ENCODE measurements at regions of chr9 and their contacts with region 1.

Region 1: GRCh38 chr9:109440797-109441287 is 57.3 kb downstream of the PTPN3 start:
- DNase-seq: peak; percentile 90
- ATAC-seq: peak; percentile 97
- H3K4me3 ChIP-seq: no peak overlapping the region
- H3K27ac ChIP-seq: no peak overlapping the region
- H3K4me1 ChIP-seq: no peaks in the 10 kb centered on the region
- H3K27me3 ChIP-seq: peaks cover 6% of the 10 kb centered on the region; the same call in 1 of the 2 replicates
- CTCF ChIP-seq: peak; percentile 89
- POLR2A ChIP-seq: no peak
- RAD21 ChIP-seq: peak; percentile 73

Region 2: GRCh38 chr9:109469646-109470358 is 29.0 kb after region 1 on chr9:
- CTCF ChIA-PET with region 1: interaction called, 10 read pairs
- POLR2A ChIA-PET with region 1: no interaction called
- dilution Hi-C with region 1: no loop called
- in situ Hi-C with region 1: no loop called
- intact Hi-C with region 1: loop called (anchors 2 kb)
- DNase-seq: peak; percentile 80
- ATAC-seq: peak; percentile 100
- H3K4me3 ChIP-seq: no peak overlapping the region
- H3K27ac ChIP-seq: no peak overlapping the region
- H3K4me1 ChIP-seq: no peaks in the 10 kb centered on the region
- H3K27me3 ChIP-seq: peaks cover 2% of the 10 kb centered on the region
- CTCF ChIP-seq: peak; percentile 91
- POLR2A ChIP-seq: no peak
- RAD21 ChIP-seq: peak; percentile 87

Region 3: DNA sequence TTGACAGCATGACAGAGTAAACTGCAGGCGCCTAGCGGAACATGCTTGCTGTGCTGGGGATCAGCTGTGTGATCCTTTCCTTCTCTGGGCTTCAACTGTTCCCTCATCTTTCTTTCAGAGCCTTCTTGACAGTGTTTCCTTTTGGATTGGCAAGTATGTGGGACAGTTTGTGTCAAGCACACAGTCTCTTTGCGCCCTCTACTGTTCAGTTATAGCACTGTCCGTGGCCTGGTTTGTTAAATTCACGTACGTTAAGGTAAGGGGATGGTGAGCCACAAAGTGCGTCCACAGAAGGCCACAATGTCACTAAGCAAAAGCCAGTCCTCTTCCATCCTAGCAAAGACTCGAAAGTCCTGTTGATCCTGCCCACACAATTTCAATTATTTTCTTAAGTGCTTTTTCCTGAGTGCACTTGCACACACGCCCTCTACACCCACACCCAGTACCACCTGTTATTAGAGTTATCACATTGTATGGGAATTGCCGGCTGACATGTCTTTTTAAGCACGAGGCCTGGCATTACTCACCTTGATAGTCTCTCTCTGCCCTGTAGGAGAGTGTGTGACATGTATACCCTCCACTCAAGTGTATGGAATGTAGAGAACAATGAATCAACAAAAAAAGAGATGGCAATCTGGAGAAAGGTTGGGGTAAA is 79.8 kb after region 1 on chr9:
- CTCF ChIA-PET with region 1: interaction called, 3 read pairs
- POLR2A ChIA-PET with region 1: no interaction called
- dilution Hi-C with region 1: no loop called
- in situ Hi-C with region 1: loop called (anchors 5 kb)
- intact Hi-C with region 1: loop called (anchors 5 kb)
- DNase-seq: peak; percentile 66
- ATAC-seq: peak; percentile 97
- H3K4me3 ChIP-seq: no peak overlapping the region
- H3K27ac ChIP-seq: no peak overlapping the region
- H3K4me1 ChIP-seq: no peaks in the 10 kb centered on the region
- H3K27me3 ChIP-seq: peaks cover 19% of the 10 kb centered on the region
- CTCF ChIP-seq: peak; percentile 80
- POLR2A ChIP-seq: no peak
- RAD21 ChIP-seq: peak; percentile 79

Measured in IMR-90 (cell line).